Common myeloid progenitor, CD34-positive (primary cell): ENCODE measurements at regions of chr4 and their contacts with region 1.

Region 1: GRCh38 chr4:73080789-73081188 is 11.3 kb upstream of the COX18 start:
- DNase-seq: no peak
- H3K4me3 ChIP-seq: no peak overlapping the region
- H3K27ac ChIP-seq: no peak overlapping the region
- H3K4me1 ChIP-seq: no peaks in the 10 kb centered on the region
- H3K27me3 ChIP-seq: no peaks in the 10 kb centered on the region

Region 2: DNA sequence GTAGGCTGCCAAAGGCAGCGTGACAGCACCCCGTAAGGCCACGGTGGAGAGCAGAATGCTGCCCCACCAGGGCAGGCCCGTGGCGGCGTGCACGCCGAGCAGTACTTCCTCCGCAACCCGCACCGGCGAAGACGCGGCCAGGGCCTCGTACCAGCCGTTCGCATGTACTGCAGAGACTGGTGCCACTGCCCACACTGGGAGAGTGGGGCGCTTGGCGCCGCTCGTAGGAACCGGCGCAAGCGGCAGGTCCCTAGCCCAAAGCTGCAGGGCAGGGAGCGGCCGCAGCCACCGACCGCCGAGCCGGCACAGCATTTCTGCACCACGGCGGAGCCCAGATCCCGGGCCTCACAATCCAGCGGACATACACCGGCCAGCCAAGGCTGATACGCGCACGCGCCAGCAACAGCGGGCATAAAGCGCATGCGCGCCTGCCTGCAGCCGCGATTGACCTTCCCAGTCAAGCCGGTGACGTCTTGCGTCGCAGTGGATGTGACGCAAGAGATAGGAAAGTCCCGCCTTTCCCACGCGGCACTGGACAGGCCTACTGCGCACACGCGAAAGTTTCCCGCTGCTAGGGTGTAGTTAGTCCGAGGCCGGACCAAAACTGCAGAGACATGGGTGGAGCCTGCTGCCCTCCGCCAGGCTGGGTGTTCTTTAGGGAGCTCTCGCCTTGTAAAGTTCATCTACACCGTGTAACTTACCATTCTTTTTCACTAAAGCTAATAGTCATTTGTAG is 11.3 kb before region 1 on chr4 and contains the start of gene COX18:
- CTCF ChIA-PET with region 1: interaction called, 11 read pairs
- POLR2A ChIA-PET with region 1: no interaction called
- DNase-seq: peak; percentile 97 to 99 (median 98)
- H3K4me3 ChIP-seq: peak within 1 kb of the TSS; percentile 71 to 94 (median 85)
- H3K27ac ChIP-seq: peak within 1 kb of the TSS; percentile 89 to 96
- H3K4me1 ChIP-seq: peaks cover 11 to 36% (median 12%) of the 10 kb centered on the region in 4 experiments
- H3K27me3 ChIP-seq: no peaks in the 10 kb centered on the region